ENCODE measurements at regions of chr15 and their contacts with region 1.

Region 1: GRCh38 chr15:89129123-89129815 is 41.0 kb downstream of the ABHD2 start:
- DNase-seq: peak; percentile 88
- H3K4me3 ChIP-seq: peak overlapping the region in 1 of 8 donors; percentile 51
- H3K27ac ChIP-seq: peak overlapping the region; percentile 69 to 91 (median 88)
- H3K4me1 ChIP-seq: peaks cover 27 to 70% (median 55%) of the 10 kb centered on the region in 6 donors
- H3K27me3 ChIP-seq: no peaks in the 10 kb centered on the region
- CTCF ChIP-seq: peak; percentile 48 to 85 (median 70)
- POLR2A ChIP-seq: no peak

Region 2: DNA sequence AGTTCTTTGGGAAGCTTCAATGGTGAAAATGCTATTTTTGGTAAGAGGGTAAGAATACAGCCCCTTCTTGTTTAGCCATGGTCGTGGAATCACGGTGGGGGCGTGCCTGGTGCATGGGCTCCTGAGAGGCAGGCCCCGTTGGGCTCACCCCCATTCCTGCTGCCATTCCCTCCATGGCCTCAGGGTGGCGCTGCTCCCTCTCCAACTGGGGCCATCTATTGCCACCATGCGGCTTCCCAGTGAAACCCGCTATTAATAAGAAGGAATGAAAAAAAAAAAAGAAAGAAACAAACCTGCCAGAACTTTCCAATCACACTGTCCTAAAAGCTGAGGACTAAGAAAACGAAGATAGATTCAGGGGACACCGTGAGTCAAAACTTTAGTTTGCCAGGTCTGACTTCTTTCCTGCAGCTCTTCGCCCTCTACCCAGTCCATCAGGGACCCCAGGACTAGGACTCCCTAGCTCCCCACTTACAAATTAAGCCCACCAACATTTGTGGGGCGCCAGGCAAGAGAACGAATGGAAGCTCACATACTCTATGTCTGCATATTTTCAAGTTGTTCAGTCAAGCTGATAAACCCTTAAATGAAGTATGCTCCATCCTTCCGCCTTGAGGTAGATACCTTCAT is 71.7 kb before region 1 on chr15:
- intact Hi-C with region 1: loop called (anchors 5 kb)
- DNase-seq: peak; percentile 94
- H3K4me3 ChIP-seq: no peak overlapping the region
- H3K27ac ChIP-seq: no peak overlapping the region
- H3K4me1 ChIP-seq: peaks cover 0 to 14% (median 9%) of the 10 kb centered on the region in 6 donors
- H3K27me3 ChIP-seq: no peaks in the 10 kb centered on the region
- CTCF ChIP-seq: peak; percentile 98 to 99 (median 99)
- POLR2A ChIP-seq: no peak

Region 3: GRCh38 chr15:89087830-89088604 is 41.3 kb before region 1 on chr15 and contains the start of gene ABHD2:
- intact Hi-C with region 1: no loop called
- DNase-seq: peak; percentile 99
- H3K4me3 ChIP-seq: peak within 1 kb of the TSS; percentile 79 to 94 (median 90)
- H3K27ac ChIP-seq: peak within 1 kb of the TSS; percentile 79 to 95 (median 90)
- H3K4me1 ChIP-seq: peaks cover 32 to 62% (median 52%) of the 10 kb centered on the region in 6 donors
- H3K27me3 ChIP-seq: no peaks in the 10 kb centered on the region
- CTCF ChIP-seq: peak in 2 of 11 experiments; percentile 21 to 29
- POLR2A ChIP-seq: peak; percentile 15 to 51 (median 44)
- total RNA-seq, gene ABHD2: 83.9 to 158 (median 123) TPM